ENCODE measurements at regions of chr1 and their contacts with region 1.

Region 1: GRCh38 chr1:110286564-110286963 is 52.6 kb upstream of the RBM15 start:
- DNase-seq: peak; percentile 12
- ATAC-seq: peak; percentile 28
- H3K4me3 ChIP-seq: no peak overlapping the region
- H3K4me3 Mint-ChIP-seq: no peak overlapping the region
- H3K27ac ChIP-seq: no peak overlapping the region
- H3K27ac Mint-ChIP-seq: no peak overlapping the region
- H3K4me1 ChIP-seq: no peaks in the 10 kb centered on the region
- H3K4me1 Mint-ChIP-seq: no peaks in the 10 kb centered on the region
- H3K27me3 ChIP-seq: no peaks in the 10 kb centered on the region
- H3K27me3 Mint-ChIP-seq: no peaks in the 10 kb centered on the region
- CTCF ChIP-seq: no peak

Region 2: DNA sequence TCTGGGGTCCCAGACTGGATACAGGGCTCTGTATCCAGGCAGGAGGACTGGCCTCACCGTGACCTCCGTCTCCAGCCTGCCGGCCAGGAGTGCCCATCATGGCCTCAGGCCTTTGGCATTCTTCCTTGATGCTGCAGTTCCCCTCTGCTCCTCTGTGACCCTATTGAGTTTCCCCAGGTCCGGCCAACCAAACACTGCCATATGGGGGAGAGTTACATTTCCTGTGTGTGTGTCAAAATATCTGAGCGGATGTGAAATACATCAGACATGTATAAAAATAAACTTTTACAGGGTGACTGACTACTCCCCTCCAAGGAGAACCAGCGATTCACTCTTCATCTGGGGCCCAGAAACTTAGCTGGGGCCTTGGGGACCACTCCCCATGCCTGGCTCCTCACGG is 184.5 kb before region 1 on chr1:
- CTCF ChIA-PET with region 1: no interaction called
- POLR2A ChIA-PET with region 1: no interaction called
- intact Hi-C with region 1: no loop called
- DNase-seq: peak; percentile 16
- ATAC-seq: peak; percentile 33
- H3K4me3 ChIP-seq: no peak overlapping the region
- H3K4me3 Mint-ChIP-seq: peak overlapping the region; percentile 20
- H3K27ac ChIP-seq: peak overlapping the region; percentile 55 to 76
- H3K27ac Mint-ChIP-seq: peak overlapping the region; percentile 37
- H3K4me1 ChIP-seq: peaks cover 17 to 27% of the 10 kb centered on the region in 2 donors
- H3K4me1 Mint-ChIP-seq: peaks cover 29% of the 10 kb centered on the region
- H3K27me3 ChIP-seq: no peaks in the 10 kb centered on the region
- H3K27me3 Mint-ChIP-seq: peaks cover under 1% of the 10 kb centered on the region
- CTCF ChIP-seq: no peak

Region 3: GRCh38 chr1:110243574-110243973 is 43.0 kb before region 1 on chr1:
- CTCF ChIA-PET with region 1: no interaction called
- POLR2A ChIA-PET with region 1: no interaction called
- intact Hi-C with region 1: loop called (anchors 5 kb)
- DNase-seq: peak; percentile 78
- ATAC-seq: peak; percentile 80
- H3K4me3 ChIP-seq: no peak overlapping the region
- H3K4me3 Mint-ChIP-seq: peak overlapping the region; percentile 61
- H3K27ac ChIP-seq: peak overlapping the region in 1 of 2 donors; percentile 41
- H3K27ac Mint-ChIP-seq: peak overlapping the region; percentile 57
- H3K4me1 ChIP-seq: peaks cover 20 to 37% of the 10 kb centered on the region in 2 donors
- H3K4me1 Mint-ChIP-seq: peaks cover 40% of the 10 kb centered on the region
- H3K27me3 ChIP-seq: no peaks in the 10 kb centered on the region
- H3K27me3 Mint-ChIP-seq: no peaks in the 10 kb centered on the region
- CTCF ChIP-seq: no peak

Region 4: GRCh38 chr1:110360431-110360830 is 73.9 kb after region 1 on chr1:
- CTCF ChIA-PET with region 1: no interaction called
- POLR2A ChIA-PET with region 1: no interaction called
- intact Hi-C with region 1: no loop called
- DNase-seq: no peak
- ATAC-seq: no peak
- H3K4me3 ChIP-seq: no peak overlapping the region
- H3K4me3 Mint-ChIP-seq: no peak overlapping the region
- H3K27ac ChIP-seq: no peak overlapping the region
- H3K27ac Mint-ChIP-seq: no peak overlapping the region
- H3K4me1 ChIP-seq: no peaks in the 10 kb centered on the region
- H3K4me1 Mint-ChIP-seq: peaks cover 14% of the 10 kb centered on the region
- H3K27me3 ChIP-seq: no peaks in the 10 kb centered on the region
- H3K27me3 Mint-ChIP-seq: no peaks in the 10 kb centered on the region
- CTCF ChIP-seq: no peak

Measured in B cell (primary cell).